B cell (primary cell): ENCODE measurements at regions of chr6 and their contacts with region 1.

Region 1: GRCh38 chr6:26003102-26003694 is 40.6 kb downstream of the TRIM38 start:
- DNase-seq: peak; percentile 69
- ATAC-seq: peak; percentile 63
- H3K4me3 ChIP-seq: no peak overlapping the region
- H3K4me3 Mint-ChIP-seq: no peak overlapping the region
- H3K27ac ChIP-seq: no peak overlapping the region
- H3K27ac Mint-ChIP-seq: no peak overlapping the region
- H3K4me1 ChIP-seq: no peaks in the 10 kb centered on the region
- H3K4me1 Mint-ChIP-seq: peaks cover 7% of the 10 kb centered on the region
- H3K27me3 ChIP-seq: no peaks in the 10 kb centered on the region
- H3K27me3 Mint-ChIP-seq: no peaks in the 10 kb centered on the region
- CTCF ChIP-seq: peak; percentile 91

Region 2: GRCh38 chr6:25556516-25556915 is 446.7 kb before region 1 on chr6:
- CTCF ChIA-PET with region 1: interaction called, 6 read pairs
- POLR2A ChIA-PET with region 1: no interaction called
- intact Hi-C with region 1: loop called (anchors 5 kb)
- DNase-seq: peak; percentile 75
- ATAC-seq: no peak
- H3K4me3 ChIP-seq: no peak overlapping the region
- H3K4me3 Mint-ChIP-seq: no peak overlapping the region
- H3K27ac ChIP-seq: no peak overlapping the region
- H3K27ac Mint-ChIP-seq: no peak overlapping the region
- H3K4me1 ChIP-seq: peaks cover 4 to 9% of the 10 kb centered on the region in 2 donors
- H3K4me1 Mint-ChIP-seq: peaks cover 11% of the 10 kb centered on the region
- H3K27me3 ChIP-seq: no peaks in the 10 kb centered on the region
- H3K27me3 Mint-ChIP-seq: peaks cover 2% of the 10 kb centered on the region
- CTCF ChIP-seq: peak; percentile 95

Region 3: DNA sequence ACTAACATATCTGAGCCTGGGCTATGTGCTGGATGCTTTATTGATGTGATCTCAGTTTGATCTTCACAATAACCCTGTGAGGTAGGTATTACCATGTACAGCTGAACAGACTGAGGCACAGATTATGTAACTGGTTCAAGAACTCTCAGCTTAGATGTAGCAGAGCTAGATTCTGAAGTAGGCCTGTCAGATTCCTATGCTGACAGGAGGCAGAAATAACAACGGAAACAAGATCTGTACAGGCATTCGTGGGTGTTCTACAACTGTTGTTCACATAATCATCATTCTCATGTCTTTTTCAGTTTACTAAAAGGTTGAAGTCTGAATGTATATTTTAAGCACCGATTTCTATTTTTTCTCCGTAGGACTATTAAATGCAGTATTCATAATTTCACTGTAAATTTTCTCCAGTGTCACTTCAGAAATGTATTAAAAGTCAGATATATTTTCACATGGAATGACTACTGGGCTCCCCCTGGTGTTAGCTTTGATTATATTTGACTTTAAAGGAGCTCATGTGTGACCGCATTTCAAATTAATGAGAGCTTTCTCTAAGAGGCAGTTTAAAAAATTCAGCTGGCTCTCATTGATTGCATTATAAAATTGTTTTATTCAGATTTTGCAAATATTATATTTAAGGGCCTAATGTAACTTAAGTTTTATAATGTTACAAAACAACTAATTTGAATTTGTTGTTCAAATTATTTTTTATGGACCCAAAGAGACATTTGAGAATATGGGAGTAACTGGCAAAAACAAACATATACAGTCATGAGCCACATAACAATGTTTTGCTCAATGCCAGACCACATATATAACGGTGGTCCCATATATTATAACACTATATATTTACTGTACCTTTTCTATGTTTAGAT is 285.1 kb before region 1 on chr6:
- CTCF ChIA-PET with region 1: interaction called, 76 read pairs
- POLR2A ChIA-PET with region 1: no interaction called
- intact Hi-C with region 1: loop called (anchors 1 kb)
- DNase-seq: peak; percentile 51
- ATAC-seq: no peak
- H3K4me3 ChIP-seq: no peak overlapping the region
- H3K4me3 Mint-ChIP-seq: no peak overlapping the region
- H3K27ac ChIP-seq: no peak overlapping the region
- H3K27ac Mint-ChIP-seq: no peak overlapping the region
- H3K4me1 ChIP-seq: no peaks in the 10 kb centered on the region
- H3K4me1 Mint-ChIP-seq: no peaks in the 10 kb centered on the region
- H3K27me3 ChIP-seq: no peaks in the 10 kb centered on the region
- H3K27me3 Mint-ChIP-seq: peaks cover 12% of the 10 kb centered on the region
- CTCF ChIP-seq: peak; percentile 79

Region 4: DNA sequence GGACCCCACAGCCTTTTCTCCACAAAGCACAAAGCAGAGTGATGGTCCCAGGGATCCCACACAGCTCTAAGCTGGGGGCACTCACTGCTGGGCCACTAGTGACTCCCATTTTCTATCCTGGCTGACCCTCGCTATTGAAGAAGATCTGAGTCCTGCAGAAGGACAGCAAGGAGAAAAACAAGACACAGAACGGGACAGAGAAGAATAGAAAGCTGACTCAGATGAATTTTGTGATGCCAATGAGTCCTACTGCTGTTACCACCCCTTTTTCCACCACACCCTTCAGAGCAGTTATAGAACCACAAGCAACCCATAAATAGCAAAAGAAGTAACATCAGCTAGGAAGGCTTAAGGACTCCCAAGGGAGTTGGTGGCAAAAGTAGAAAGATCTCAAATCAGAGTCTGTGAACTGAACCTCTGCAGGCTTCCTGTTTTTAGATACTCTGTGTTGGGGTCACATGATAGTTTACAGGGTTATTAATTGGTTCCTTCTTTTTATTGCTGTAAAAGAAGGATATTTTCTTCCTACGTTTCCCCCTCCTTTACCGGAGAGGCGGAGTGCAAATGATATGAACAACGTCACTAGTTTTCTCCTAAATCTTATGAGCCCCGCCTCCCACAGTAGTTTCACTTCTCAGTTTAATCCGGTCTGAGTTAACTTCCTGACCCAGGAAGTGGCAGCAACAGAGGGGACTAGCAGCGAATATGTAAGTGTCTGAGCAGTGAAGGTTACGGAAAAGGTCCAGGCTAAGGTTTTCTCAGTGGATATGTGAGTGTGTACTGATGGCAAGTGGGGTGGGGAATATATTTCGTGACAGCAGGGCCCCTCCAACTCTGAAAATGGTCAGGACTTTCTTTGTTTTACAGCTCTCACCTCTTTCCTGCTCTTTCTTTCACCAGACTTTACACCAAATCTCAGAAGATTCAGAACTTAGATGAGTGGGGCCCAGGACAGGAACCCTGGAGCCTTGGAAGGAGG is 40.8 kb before region 1 on chr6 and contains the start of gene TRIM38:
- CTCF ChIA-PET with region 1: interaction called, 23 read pairs
- POLR2A ChIA-PET with region 1: no interaction called
- intact Hi-C with region 1: no loop called
- DNase-seq: peak; percentile 95
- ATAC-seq: peak; percentile 84
- H3K4me3 ChIP-seq: peak within 1 kb of the TSS; percentile 83 to 95 (median 92)
- H3K4me3 Mint-ChIP-seq: peak within 1 kb of the TSS; percentile 97
- H3K27ac ChIP-seq: peak within 1 kb of the TSS; percentile 94 to 97
- H3K27ac Mint-ChIP-seq: peak within 1 kb of the TSS; percentile 98
- H3K4me1 ChIP-seq: peaks cover 74 to 75% of the 10 kb centered on the region in 2 donors
- H3K4me1 Mint-ChIP-seq: peaks cover 78% of the 10 kb centered on the region
- H3K27me3 ChIP-seq: no peaks in the 10 kb centered on the region
- H3K27me3 Mint-ChIP-seq: no peaks in the 10 kb centered on the region
- CTCF ChIP-seq: no peak
- total RNA-seq, gene TRIM38: 57.2 and 57.5 TPM in 2 replicates

Region 5: DNA sequence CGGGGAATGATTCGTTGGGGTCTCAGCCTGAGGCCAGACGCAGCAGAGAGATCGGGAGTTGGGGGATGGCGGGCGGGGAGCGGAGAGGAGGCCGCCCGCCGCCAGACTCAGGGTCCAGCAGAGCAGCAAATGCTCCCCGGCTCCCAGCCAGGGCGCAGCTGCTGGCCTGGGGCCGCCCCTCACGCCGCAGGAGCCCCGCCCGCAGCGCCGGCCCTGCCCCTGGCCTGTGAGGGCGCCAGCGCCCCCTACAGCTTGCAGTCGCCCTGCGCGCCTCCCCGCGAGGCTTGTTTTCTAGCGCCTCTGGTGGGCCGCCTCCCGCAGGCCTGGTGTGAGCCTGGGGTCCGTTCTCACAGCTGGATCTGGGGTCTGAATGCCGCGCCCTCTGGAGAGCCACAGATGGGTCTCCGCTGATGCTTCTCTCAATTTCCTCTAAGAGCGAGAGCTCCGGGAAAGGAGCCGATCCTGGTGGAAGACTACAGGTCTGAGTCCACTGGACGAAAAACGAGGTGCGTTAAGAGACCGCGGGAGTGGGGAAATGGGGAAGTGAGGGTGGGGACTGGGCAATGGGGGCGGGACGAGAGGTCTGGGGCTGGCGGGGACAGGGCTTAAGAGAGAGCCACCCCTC is 10.7 kb before region 1 on chr6:
- CTCF ChIA-PET with region 1: interaction called, 79 read pairs
- POLR2A ChIA-PET with region 1: interaction called, 3 read pairs
- intact Hi-C with region 1: no loop called
- DNase-seq: peak; percentile 97
- ATAC-seq: peak; percentile 87
- H3K4me3 ChIP-seq: peak overlapping the region; percentile 49 to 80 (median 72)
- H3K4me3 Mint-ChIP-seq: peak overlapping the region; percentile 99
- H3K27ac ChIP-seq: peak overlapping the region; percentile 84 to 94
- H3K27ac Mint-ChIP-seq: peak overlapping the region; percentile 100
- H3K4me1 ChIP-seq: peaks cover 11 to 20% of the 10 kb centered on the region in 2 donors
- H3K4me1 Mint-ChIP-seq: peaks cover 47% of the 10 kb centered on the region
- H3K27me3 ChIP-seq: no peaks in the 10 kb centered on the region
- H3K27me3 Mint-ChIP-seq: no peaks in the 10 kb centered on the region
- CTCF ChIP-seq: peak; percentile 99